B cell (primary cell): ENCODE measurements at regions of chr22 and their contacts with region 1.

Region 1: GRCh38 chr22:41822317-41823060 is 10.4 kb upstream of the SREBF2 start:
- DNase-seq: peak; percentile 85
- ATAC-seq: peak; percentile 84
- H3K4me3 ChIP-seq: no peak overlapping the region
- H3K4me3 Mint-ChIP-seq: no peak overlapping the region
- H3K27ac ChIP-seq: no peak overlapping the region
- H3K27ac Mint-ChIP-seq: peak overlapping the region; percentile 57
- H3K4me1 ChIP-seq: no peaks in the 10 kb centered on the region
- H3K4me1 Mint-ChIP-seq: peaks cover 7% of the 10 kb centered on the region
- H3K27me3 ChIP-seq: no peaks in the 10 kb centered on the region
- H3K27me3 Mint-ChIP-seq: no peaks in the 10 kb centered on the region
- CTCF ChIP-seq: peak; percentile 74

Region 2: DNA sequence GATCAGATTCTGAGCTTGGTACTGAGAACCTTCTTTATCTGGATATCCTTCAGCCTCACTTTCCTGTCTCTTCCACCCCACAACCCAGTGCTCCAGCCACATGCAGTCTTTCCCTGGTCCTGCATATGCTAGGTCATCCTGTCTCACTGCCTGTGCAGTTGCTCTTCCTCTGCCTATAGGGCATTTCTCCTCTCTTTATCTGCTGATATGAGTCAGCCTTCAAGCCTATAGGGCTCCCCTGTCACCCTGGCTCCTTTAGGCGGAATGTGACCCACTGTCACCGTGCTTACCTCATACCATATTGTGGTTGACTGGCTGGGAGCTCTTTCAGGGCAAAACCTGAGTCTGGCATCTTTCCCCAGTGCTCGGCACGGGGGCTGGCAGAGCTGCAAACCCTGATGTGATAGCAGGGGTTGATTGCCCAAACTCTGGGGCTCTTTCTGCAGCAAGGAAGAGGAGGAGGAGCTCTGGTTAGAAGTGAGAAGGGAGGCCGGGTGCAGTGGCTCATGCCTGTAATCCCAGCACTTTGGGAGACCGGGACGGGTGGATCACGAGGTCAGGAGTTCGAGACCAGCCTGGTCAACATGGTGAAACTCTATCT is 96.9 kb before region 1 on chr22:
- CTCF ChIA-PET with region 1: no interaction called
- POLR2A ChIA-PET with region 1: no interaction called
- intact Hi-C with region 1: no loop called
- DNase-seq: no peak
- ATAC-seq: no peak
- H3K4me3 ChIP-seq: no peak overlapping the region
- H3K4me3 Mint-ChIP-seq: no peak overlapping the region
- H3K27ac ChIP-seq: no peak overlapping the region
- H3K27ac Mint-ChIP-seq: no peak overlapping the region
- H3K4me1 ChIP-seq: no peaks in the 10 kb centered on the region
- H3K4me1 Mint-ChIP-seq: no peaks in the 10 kb centered on the region
- H3K27me3 ChIP-seq: no peaks in the 10 kb centered on the region
- H3K27me3 Mint-ChIP-seq: no peaks in the 10 kb centered on the region
- CTCF ChIP-seq: no peak

Region 3: GRCh38 chr22:41899992-41900651 is 77.6 kb after region 1 on chr22:
- CTCF ChIA-PET with region 1: no interaction called
- POLR2A ChIA-PET with region 1: interaction called, 15 read pairs
- intact Hi-C with region 1: no loop called
- DNase-seq: no peak
- ATAC-seq: no peak
- H3K4me3 ChIP-seq: no peak overlapping the region
- H3K4me3 Mint-ChIP-seq: no peak overlapping the region
- H3K27ac ChIP-seq: no peak overlapping the region
- H3K27ac Mint-ChIP-seq: no peak overlapping the region
- H3K4me1 ChIP-seq: no peaks in the 10 kb centered on the region
- H3K4me1 Mint-ChIP-seq: no peaks in the 10 kb centered on the region
- H3K27me3 ChIP-seq: no peaks in the 10 kb centered on the region
- H3K27me3 Mint-ChIP-seq: no peaks in the 10 kb centered on the region
- CTCF ChIP-seq: no peak

Region 4: DNA sequence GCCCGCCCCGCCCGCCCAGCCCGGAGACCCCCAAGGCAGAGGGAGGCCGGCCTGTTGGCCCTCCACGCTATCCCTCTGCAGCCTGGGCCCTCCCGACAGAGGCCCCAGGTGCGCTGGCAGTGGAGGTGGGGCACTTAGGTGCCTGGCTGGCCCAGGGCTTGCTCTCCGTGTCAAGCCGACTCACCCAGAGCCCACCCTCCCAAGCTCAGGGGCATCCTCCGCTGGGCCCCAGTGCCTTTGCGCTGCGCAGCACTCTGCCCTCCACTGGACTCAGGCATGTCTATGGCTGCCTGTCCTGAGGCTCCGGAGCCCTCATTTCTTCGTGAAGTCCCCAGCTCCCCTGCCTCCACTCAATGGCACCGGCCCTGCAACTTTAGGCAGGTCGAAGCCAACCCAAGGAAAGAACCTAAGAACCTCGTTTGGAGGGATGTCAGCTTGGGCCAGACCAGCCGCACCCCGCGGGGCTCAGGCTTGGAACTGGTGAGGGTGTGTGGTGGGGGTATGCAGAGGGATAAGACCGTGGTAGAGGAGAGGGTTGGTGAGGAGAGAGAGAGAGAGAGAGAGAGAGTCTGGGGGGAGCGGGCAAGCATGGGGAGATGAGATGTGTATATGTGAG is 135.6 kb after region 1 on chr22:
- CTCF ChIA-PET with region 1: interaction called, 19 read pairs
- POLR2A ChIA-PET with region 1: no interaction called
- intact Hi-C with region 1: loop called (anchors 1 kb)
- DNase-seq: no peak
- ATAC-seq: peak; percentile 28
- H3K4me3 ChIP-seq: peak overlapping the region in 1 of 5 experiments; percentile 19
- H3K4me3 Mint-ChIP-seq: peak overlapping the region; percentile 26
- H3K27ac ChIP-seq: no peak overlapping the region
- H3K27ac Mint-ChIP-seq: no peak overlapping the region
- H3K4me1 ChIP-seq: peaks cover 11 to 22% of the 10 kb centered on the region in 2 donors
- H3K4me1 Mint-ChIP-seq: peaks cover 21% of the 10 kb centered on the region
- H3K27me3 ChIP-seq: no peaks in the 10 kb centered on the region
- H3K27me3 Mint-ChIP-seq: no peaks in the 10 kb centered on the region
- CTCF ChIP-seq: peak; percentile 44

Region 5: GRCh38 chr22:42500161-42500835 is 677.8 kb after region 1 on chr22:
- CTCF ChIA-PET with region 1: no interaction called
- POLR2A ChIA-PET with region 1: no interaction called
- intact Hi-C with region 1: no loop called
- DNase-seq: peak; percentile 91
- ATAC-seq: peak; percentile 89
- H3K4me3 ChIP-seq: peak overlapping the region in 4 of 5 experiments; percentile 41 to 60 (median 50)
- H3K4me3 Mint-ChIP-seq: peak overlapping the region; percentile 83
- H3K27ac ChIP-seq: no peak overlapping the region
- H3K27ac Mint-ChIP-seq: peak overlapping the region; percentile 37
- H3K4me1 ChIP-seq: peaks cover 12 to 14% of the 10 kb centered on the region in 2 donors
- H3K4me1 Mint-ChIP-seq: peaks cover 15% of the 10 kb centered on the region
- H3K27me3 ChIP-seq: no peaks in the 10 kb centered on the region
- H3K27me3 Mint-ChIP-seq: no peaks in the 10 kb centered on the region
- CTCF ChIP-seq: no peak